MCF 10A (cell line): ENCODE measurements at regions of chr19 and their contacts with region 1.

Region 1: DNA sequence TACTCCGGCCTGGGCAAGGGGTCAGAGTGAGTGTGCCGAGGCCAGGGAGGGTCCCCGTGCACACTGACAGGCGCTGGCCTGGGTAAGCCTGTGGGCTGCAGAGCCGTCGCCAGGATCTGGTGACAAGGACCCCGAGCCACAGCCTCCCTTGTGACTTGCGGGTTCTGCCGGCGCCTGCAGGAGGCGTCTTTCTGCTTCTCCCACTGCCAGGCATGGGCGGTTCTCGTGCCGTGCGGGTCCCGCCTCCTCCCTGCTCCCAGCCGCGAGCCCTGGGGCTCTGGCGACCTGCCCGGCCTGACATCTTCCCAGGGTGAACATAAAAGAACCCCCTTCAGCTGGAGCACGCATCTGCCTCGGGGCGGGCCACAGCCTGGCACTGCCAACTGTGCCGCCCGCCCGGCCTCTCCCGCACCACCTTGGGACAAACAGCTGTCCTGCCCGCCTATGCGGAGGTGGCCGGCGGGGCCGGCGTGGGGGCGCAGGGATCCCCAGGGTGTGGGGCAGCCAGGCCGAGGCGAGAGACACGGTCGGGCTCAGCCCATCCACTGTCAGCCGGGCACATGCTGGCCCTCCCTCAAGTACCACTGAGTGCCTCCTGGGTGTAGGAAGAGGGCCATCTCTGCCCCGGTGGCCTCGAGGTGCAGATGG is 1.5 kb upstream of the HCN2 start:
- DNase-seq: peak; percentile 94
- H3K4me3 Mint-ChIP-seq: no peak overlapping the region
- H3K27ac Mint-ChIP-seq: no peak overlapping the region
- H3K4me1 Mint-ChIP-seq: no peaks in the 10 kb centered on the region
- H3K27me3 Mint-ChIP-seq: no peaks in the 10 kb centered on the region
- CTCF ChIP-seq: peak; percentile 67

Region 2: GRCh38 chr19:572140-572742 is 16.0 kb before region 1 on chr19 and contains the start of gene BSG:
- CTCF ChIA-PET with region 1: interaction called, 7 read pairs
- POLR2A ChIA-PET with region 1: interaction called, 15 read pairs
- intact Hi-C with region 1: no loop called
- DNase-seq: peak; percentile 98
- H3K4me3 Mint-ChIP-seq: peak within 1 kb of the TSS; percentile 85
- H3K27ac Mint-ChIP-seq: peak within 1 kb of the TSS; percentile 96
- H3K4me1 Mint-ChIP-seq: peaks cover 23% of the 10 kb centered on the region
- H3K27me3 Mint-ChIP-seq: no peaks in the 10 kb centered on the region
- CTCF ChIP-seq: no peak
- total RNA-seq, gene BSG: 550 and 557 TPM in 2 replicates

Region 3: DNA sequence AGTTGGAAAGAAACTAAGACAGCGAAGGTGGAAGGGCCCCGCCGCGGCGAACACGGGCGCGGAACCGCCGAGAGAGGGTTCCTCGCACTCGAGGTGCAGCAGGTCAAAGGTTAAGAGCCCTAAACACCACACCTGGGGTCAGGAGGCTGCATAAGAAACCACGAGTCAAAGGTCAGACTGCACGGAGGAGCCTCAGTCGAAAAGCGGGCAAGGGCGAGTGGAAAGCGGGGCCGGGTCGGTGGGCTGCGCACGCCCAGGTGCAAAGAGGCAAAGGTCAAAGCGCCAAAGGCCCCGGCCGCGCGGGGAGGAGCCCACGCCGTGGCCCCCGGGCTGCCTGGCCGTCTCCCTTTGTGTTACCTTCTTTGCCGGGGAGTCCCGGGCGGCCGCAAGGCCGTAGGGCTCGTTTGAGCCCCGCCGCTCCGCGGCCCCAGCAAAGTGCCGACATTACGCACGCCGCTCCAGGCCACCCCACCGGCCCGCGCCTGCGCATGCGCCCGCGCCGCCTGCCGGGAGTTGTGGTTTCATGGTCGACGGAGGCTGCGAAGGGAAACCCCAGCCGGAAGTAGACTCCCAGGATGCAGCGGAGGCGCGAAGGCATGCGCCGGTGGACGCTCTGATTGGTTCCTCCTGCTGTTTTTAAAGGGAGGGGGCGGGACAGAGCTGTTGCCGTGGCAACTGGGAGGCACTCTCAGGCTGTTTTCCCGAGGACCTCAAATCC is 45.0 kb after region 1 on chr19 and contains the start of gene POLRMT:
- CTCF ChIA-PET with region 1: interaction called, 3 read pairs
- POLR2A ChIA-PET with region 1: interaction called, 8 read pairs
- intact Hi-C with region 1: loop called (anchors 2 kb)
- DNase-seq: peak; percentile 99
- H3K4me3 Mint-ChIP-seq: peak within 1 kb of the TSS; percentile 84
- H3K27ac Mint-ChIP-seq: peak within 1 kb of the TSS; percentile 84
- H3K4me1 Mint-ChIP-seq: peaks cover 3% of the 10 kb centered on the region
- H3K27me3 Mint-ChIP-seq: no peaks in the 10 kb centered on the region
- CTCF ChIP-seq: no peak
- total RNA-seq, gene POLRMT: 36.9 and 40.9 TPM in 2 replicates

Region 4: DNA sequence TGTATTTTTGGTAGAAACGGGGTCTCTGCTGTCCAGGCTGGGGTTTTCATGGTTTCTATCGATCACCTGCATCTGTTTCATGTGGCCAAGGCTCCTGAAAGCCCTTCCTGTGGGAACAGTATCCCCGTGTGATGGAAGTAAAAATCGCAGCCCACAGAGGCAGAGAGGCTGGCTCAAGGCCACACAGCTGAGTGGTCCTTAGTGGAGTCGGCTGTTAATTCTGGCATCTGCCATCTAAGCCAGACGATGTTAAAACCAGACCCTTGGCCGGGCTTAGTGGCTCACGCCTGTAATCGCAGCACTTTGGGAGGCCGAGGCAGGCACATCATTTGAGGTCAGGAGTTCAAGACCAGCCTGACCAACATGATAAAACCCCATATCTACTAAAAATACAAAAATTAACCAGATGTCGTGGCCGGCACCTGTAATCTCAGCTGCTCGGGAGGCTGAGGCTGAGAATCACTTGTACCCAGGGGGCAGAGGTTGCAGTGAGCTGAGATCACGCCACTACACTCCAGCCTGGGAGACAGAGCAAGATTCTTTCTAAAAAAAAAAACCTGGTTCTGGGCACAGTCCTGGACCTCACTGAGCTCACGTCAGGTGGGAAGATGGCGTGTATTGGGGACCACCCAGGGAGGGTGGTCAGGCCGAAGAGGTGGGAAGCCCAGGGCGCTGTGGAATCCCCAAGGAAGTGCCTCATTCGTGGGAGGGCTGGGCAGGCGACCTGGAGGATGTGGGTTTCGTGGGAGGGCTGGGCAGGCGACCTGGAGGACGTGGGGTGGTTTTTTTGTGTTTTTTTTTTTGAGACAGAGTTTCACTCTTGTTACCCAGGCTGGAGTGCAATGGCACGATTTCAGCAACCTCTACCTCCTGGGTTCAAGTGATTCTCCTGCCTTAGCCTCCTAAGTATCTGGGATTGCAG is 144.2 kb after region 1 on chr19:
- CTCF ChIA-PET with region 1: no interaction called
- POLR2A ChIA-PET with region 1: interaction called, 4 read pairs
- intact Hi-C with region 1: loop called (anchors 5 kb)
- DNase-seq: no peak
- H3K4me3 Mint-ChIP-seq: no peak overlapping the region
- H3K27ac Mint-ChIP-seq: no peak overlapping the region
- H3K4me1 Mint-ChIP-seq: peaks cover 5% of the 10 kb centered on the region
- H3K27me3 Mint-ChIP-seq: no peaks in the 10 kb centered on the region
- CTCF ChIP-seq: no peak